Activated T-helper 1 cell treated with anti-CD3 and anti-CD28 coated beads, Interleukin-12 subunit alpha, Interleukin-12 subunit beta, Interleukin-2, Interleukin-4 antibody, amounts not matched to agents 30 ng/mL and 10 ng/mL and 1 ng/mL, durations not matched to agents 14 hours and 24 hours and 36 hours (primary cell): ENCODE measurements at regions of chr3 and their contacts with region 1.

Region 1: DNA sequence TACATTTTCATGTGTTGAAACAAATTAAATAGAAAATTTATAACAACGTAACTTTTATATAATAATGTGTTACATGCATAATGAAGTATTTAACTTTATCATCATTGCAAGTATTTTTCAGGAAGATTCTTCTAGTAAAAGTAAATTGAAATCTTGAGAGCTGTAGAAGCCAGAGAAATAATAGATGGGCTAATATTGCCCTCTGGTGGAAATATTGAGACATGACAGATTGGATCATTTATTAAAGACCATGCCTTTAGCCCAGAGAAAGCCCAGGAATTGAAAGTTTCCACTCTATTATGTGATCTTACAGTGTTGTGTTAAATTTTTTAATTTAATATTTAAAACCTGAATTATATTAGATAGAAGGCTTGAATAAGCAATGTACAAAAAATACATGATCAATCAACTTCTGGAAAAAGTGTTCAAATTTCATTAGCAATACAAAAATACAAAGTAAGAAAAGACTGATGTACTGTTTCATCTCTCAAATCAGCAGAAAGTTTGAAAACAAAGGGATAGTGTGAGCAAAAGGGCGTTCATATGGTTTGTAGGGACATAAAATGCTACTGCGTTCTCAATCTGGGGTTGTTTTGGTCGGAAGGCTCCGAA is 52.7 kb upstream of the SPTSSB start:
- DNase-seq: no peak
- H3K4me3 Mint-ChIP-seq: no peak overlapping the region
- H3K27ac Mint-ChIP-seq: no peak overlapping the region
- H3K4me1 Mint-ChIP-seq: no peaks in the 10 kb centered on the region
- H3K27me3 Mint-ChIP-seq: peaks cover 16% of the 10 kb centered on the region

Region 2: DNA sequence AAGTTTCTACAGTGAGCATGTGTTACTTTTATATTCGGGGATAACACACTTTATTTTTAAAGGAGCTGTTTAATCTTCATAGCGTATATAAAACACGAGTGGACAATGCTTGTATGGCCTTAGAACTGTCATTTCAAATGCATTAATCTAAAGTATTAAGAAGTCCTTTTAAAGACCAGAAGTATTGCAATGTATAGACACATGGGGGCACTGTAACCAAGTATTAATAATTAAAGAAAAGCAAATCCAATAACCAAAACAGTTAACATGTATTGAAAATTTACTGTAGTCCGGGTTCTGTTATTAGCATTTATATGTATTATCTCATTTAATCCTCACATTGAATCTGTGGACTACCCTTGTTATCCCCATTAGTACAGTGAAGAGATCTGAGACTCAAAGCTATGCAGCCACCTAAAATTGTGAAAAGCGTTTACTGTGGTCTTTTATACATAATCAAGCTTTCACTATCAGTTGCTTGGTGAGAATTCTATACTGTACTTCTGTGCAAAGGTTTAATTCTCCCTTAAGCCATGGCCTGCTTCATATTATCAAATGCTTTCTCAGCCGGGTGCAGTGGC is 737.0 kb before region 1 on chr3:
- intact Hi-C with region 1: loop called (anchors 2 kb)
- DNase-seq: no peak
- H3K4me3 Mint-ChIP-seq: no peak overlapping the region
- H3K27ac Mint-ChIP-seq: no peak overlapping the region
- H3K4me1 Mint-ChIP-seq: no peaks in the 10 kb centered on the region
- H3K27me3 Mint-ChIP-seq: no peaks in the 10 kb centered on the region

Region 3: GRCh38 chr3:160707187-160707794 is 716.7 kb before region 1 on chr3:
- intact Hi-C with region 1: loop called (anchors 5 kb)
- DNase-seq: peak; percentile 8
- H3K4me3 Mint-ChIP-seq: no peak overlapping the region
- H3K27ac Mint-ChIP-seq: no peak overlapping the region
- H3K4me1 Mint-ChIP-seq: no peaks in the 10 kb centered on the region
- H3K27me3 Mint-ChIP-seq: peaks cover 15% of the 10 kb centered on the region

Region 4: DNA sequence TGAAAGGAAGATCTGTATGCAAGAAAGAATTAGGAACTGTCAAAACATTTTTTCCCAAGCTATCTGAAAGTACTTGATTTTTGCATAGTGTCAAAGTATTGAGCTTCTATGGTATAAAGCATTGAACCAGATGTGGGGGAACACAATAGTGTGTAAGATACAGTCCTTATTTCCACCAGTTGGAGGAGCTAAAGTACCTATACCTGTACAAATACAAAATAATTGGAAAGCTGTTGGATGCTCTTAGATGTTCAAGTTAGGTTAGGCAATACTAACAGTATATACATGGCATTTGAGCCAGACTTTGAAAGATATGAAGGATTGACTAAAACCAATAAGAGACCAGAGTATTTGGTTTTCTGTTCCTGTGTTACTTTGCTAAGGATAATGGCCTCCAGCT is 467.2 kb before region 1 on chr3:
- intact Hi-C with region 1: loop called (anchors 2 kb)
- DNase-seq: no peak
- H3K4me3 Mint-ChIP-seq: no peak overlapping the region
- H3K27ac Mint-ChIP-seq: no peak overlapping the region
- H3K4me1 Mint-ChIP-seq: no peaks in the 10 kb centered on the region
- H3K27me3 Mint-ChIP-seq: peaks cover 2% of the 10 kb centered on the region

Region 5: DNA sequence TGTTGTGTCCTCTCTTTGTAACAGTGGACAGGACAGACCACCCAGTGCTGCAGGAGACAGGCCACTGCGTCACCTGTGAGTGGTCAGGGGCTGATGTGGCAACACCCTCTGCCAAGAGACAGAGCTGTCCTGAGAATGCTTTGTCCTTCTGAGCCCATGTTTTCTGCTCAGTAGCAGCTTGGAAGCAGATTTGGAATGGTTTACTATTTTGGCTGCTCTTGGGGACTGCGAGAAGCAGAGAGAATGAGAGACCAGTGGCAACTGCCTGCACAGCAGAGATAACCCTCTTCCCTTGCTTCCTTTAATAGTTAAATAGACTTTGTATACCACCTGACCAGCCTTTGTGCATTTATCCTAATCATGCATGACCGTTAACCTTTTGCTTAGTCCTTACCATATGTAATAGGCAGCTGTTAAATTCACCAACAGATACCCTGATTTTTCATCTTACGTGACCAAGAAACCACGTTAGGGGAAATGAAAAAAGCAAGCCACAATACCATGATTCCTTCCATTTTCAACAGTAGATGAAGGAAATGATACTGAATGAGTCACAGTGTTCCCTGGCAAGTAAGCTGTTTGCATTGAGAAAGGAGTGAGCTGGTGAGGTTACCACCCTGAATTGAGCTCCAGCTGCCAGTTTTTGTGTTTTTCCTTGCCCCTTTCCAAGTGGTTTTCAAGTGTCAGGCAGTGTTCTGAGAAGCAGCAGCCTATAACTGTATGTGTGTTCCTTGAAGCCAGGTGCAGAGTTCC is 354.3 kb before region 1 on chr3:
- intact Hi-C with region 1: no loop called
- DNase-seq: no peak
- H3K4me3 Mint-ChIP-seq: no peak overlapping the region
- H3K27ac Mint-ChIP-seq: no peak overlapping the region
- H3K4me1 Mint-ChIP-seq: peaks cover 48% of the 10 kb centered on the region
- H3K27me3 Mint-ChIP-seq: no peaks in the 10 kb centered on the region

Region 6: GRCh38 chr3:161096771-161097355 is 327.2 kb before region 1 on chr3:
- intact Hi-C with region 1: loop called (anchors 1 kb)
- DNase-seq: no peak
- H3K4me3 Mint-ChIP-seq: no peak overlapping the region
- H3K27ac Mint-ChIP-seq: no peak overlapping the region
- H3K4me1 Mint-ChIP-seq: no peaks in the 10 kb centered on the region
- H3K27me3 Mint-ChIP-seq: peaks cover 3% of the 10 kb centered on the region

Region 7: GRCh38 chr3:161379419-161379818 is 44.6 kb before region 1 on chr3:
- intact Hi-C with region 1: no loop called
- DNase-seq: no peak
- H3K4me3 Mint-ChIP-seq: no peak overlapping the region
- H3K27ac Mint-ChIP-seq: no peak overlapping the region
- H3K4me1 Mint-ChIP-seq: no peaks in the 10 kb centered on the region
- H3K27me3 Mint-ChIP-seq: peaks cover 59% of the 10 kb centered on the region